Activated CD4-positive, alpha-beta T cell treated with anti-CD3 and anti-CD28 coated beads for 36 hours (primary cell): ENCODE measurements at regions of chr11 and their contacts with region 1.

Region 1: GRCh38 chr11:113305440-113306336 is 8.7 kb upstream of the TTC12 start:
- DNase-seq: peak; percentile 85
- ATAC-seq: peak; percentile 99
- H3K4me3 Mint-ChIP-seq: no peak overlapping the region
- H3K27ac Mint-ChIP-seq: no peak overlapping the region
- H3K4me1 Mint-ChIP-seq: peaks cover 3% of the 10 kb centered on the region
- H3K27me3 Mint-ChIP-seq: peaks cover 6% of the 10 kb centered on the region

Region 2: GRCh38 chr11:113274713-113275582 is 30.7 kb before region 1 on chr11:
- CTCF ChIA-PET with region 1: no interaction called
- POLR2A ChIA-PET with region 1: no interaction called
- intact Hi-C with region 1: no loop called
- DNase-seq: no peak
- ATAC-seq: no peak
- H3K4me3 Mint-ChIP-seq: no peak overlapping the region
- H3K27ac Mint-ChIP-seq: no peak overlapping the region
- H3K4me1 Mint-ChIP-seq: no peaks in the 10 kb centered on the region
- H3K27me3 Mint-ChIP-seq: no peaks in the 10 kb centered on the region

Region 3: GRCh38 chr11:113373306-113373705 is 67.6 kb after region 1 on chr11:
- CTCF ChIA-PET with region 1: no interaction called
- POLR2A ChIA-PET with region 1: no interaction called
- intact Hi-C with region 1: no loop called
- DNase-seq: no peak
- ATAC-seq: no peak
- H3K4me3 Mint-ChIP-seq: no peak overlapping the region
- H3K27ac Mint-ChIP-seq: no peak overlapping the region
- H3K4me1 Mint-ChIP-seq: no peaks in the 10 kb centered on the region
- H3K27me3 Mint-ChIP-seq: no peaks in the 10 kb centered on the region

Region 4: GRCh38 chr11:113393501-113393985 is 87.9 kb after region 1 on chr11:
- CTCF ChIA-PET with region 1: no interaction called
- POLR2A ChIA-PET with region 1: no interaction called
- intact Hi-C with region 1: no loop called
- DNase-seq: no peak
- ATAC-seq: no peak
- H3K4me3 Mint-ChIP-seq: no peak overlapping the region
- H3K27ac Mint-ChIP-seq: no peak overlapping the region
- H3K4me1 Mint-ChIP-seq: no peaks in the 10 kb centered on the region
- H3K27me3 Mint-ChIP-seq: no peaks in the 10 kb centered on the region

Region 5: DNA sequence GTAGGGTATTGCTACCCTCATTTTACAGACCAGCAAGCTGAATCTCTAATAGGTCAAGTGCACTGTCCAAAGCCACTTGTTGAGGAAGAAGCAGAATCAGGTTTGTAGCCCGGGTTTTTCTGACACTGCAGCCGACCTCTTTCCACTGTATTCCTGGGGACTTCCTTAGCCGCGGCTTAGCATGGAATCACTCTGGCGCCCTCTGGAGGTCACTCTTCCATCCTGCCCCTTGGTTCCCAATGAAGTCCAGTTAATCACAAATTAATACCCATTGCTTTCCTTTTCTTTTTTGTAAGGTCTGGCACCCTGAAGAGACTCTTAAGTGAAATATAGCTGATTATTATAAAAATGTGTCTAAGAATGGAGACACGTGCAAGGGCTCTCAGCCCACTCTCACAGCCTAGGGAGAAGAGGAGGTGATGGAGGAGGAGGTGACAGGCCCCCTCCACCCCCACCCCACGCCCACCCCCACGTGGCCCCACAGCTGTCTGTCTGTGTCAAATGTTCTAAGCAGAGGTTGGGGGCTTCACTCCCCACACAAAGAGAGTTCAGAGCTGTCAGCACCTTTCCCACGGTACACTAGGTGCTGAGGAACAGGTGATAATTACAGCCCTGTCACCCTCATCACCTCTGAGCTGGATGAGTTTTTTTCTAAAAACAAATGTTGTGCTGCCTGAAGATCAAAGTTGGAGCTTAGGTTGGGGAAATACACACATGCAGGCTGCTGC is 227.2 kb after region 1 on chr11:
- CTCF ChIA-PET with region 1: interaction called, 15 read pairs
- POLR2A ChIA-PET with region 1: no interaction called
- intact Hi-C with region 1: loop called (anchors 1 kb)
- DNase-seq: peak; percentile 77
- ATAC-seq: peak; percentile 57
- H3K4me3 Mint-ChIP-seq: no peak overlapping the region
- H3K27ac Mint-ChIP-seq: no peak overlapping the region
- H3K4me1 Mint-ChIP-seq: peaks cover 2% of the 10 kb centered on the region
- H3K27me3 Mint-ChIP-seq: peaks cover 20% of the 10 kb centered on the region

Region 6: DNA sequence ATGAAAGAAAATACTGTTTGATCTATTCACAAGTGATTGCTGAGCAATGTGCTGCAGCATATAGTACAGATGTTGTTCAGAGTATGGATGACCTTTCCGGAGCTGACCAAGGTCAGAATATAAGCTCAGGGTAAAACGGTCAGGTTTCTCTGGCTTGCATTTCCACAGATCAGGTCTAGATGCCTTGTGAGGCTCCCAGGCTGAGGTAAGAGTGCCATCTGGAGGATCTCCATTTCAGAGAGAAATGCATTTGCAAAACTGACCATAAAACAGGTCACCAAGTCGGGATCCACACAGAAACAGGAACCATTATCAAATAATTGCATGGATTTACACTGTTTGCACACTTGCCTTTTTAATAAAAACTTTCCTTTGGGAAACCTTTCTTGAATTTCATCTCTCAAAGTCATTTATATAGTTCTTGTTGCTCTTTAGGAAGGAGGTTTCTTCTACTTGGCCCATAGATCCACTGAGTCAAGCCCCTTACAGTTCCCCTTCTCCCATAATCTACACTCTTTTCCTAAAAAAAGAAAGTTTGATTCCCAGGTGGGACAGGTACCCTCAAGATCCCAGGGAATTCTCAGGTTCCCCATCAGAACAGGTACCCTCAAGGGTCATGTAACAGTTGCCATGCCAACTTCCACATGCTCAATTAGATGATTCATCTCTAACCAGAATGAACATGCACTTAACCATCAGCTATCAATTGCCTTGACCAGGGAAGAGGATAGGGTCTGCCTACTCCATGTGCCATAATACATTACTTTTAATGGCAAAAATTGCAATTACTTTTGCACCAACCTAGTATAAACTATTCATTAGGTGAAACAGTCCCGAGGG is 425.4 kb after region 1 on chr11:
- CTCF ChIA-PET with region 1: no interaction called
- POLR2A ChIA-PET with region 1: no interaction called
- intact Hi-C with region 1: loop called (anchors 1 to 5 kb)
- DNase-seq: peak; percentile 22
- ATAC-seq: no peak
- H3K4me3 Mint-ChIP-seq: no peak overlapping the region
- H3K27ac Mint-ChIP-seq: no peak overlapping the region
- H3K4me1 Mint-ChIP-seq: peaks cover 1% of the 10 kb centered on the region
- H3K27me3 Mint-ChIP-seq: no peaks in the 10 kb centered on the region

Region 7: GRCh38 chr11:113796663-113797259 is 491.1 kb after region 1 on chr11:
- CTCF ChIA-PET with region 1: interaction called, 4 read pairs
- POLR2A ChIA-PET with region 1: no interaction called
- intact Hi-C with region 1: loop called (anchors 1 kb)
- DNase-seq: peak; percentile 24
- ATAC-seq: peak; percentile 71
- H3K4me3 Mint-ChIP-seq: no peak overlapping the region
- H3K27ac Mint-ChIP-seq: no peak overlapping the region
- H3K4me1 Mint-ChIP-seq: no peaks in the 10 kb centered on the region
- H3K27me3 Mint-ChIP-seq: no peaks in the 10 kb centered on the region